AG04449 (cell line): ENCODE measurements at regions of chr17 and their contacts with region 1.

Region 1: GRCh38 chr17:76278952-76279741 is 14.0 kb downstream of the UBALD2 start:
- DNase-seq: peak; percentile 14
- H3K4me3 ChIP-seq: no peak overlapping the region
- CTCF ChIP-seq: peak; percentile 94

Region 2: DNA sequence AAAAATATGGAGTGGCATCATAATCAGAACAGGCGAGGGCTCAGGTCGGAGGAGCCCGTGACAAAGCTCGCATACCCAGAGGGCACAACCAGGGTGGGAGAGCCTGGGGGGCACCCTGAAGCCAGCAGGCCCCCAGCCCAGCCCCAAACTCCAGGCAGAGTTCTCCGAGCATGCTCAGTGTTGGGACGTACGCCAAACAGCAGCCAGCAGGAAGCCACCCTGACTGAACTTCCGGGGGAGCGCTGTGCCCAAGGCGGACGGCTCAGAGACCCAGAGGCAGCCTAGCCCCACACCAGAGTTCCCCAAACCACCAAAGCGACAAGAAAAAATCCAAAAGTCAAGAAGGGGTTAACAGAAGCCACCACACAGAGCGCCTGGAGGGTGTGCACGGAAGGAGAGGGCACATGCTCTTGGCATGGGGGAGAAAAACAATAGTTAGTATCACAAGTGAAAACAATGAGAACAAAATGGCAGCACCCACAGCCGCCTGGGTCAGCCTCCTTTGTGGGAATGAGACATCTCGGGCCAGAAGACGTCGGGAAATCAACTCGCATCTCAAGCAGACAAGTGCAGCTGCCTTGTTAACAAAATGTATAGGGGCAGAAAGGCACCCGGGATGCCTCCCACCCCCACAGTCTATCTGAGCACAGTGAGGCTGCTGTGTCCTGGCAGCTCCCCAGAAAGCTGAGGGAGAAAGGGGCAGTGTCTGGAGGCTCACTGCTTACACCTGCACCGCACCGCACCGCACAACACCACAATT is 187.4 kb before region 1 on chr17:
- CTCF ChIA-PET with region 1: interaction called, 20 read pairs
- POLR2A ChIA-PET with region 1: no interaction called
- DNase-seq: no peak
- H3K4me3 ChIP-seq: no peak overlapping the region
- CTCF ChIP-seq: no peak

Region 3: DNA sequence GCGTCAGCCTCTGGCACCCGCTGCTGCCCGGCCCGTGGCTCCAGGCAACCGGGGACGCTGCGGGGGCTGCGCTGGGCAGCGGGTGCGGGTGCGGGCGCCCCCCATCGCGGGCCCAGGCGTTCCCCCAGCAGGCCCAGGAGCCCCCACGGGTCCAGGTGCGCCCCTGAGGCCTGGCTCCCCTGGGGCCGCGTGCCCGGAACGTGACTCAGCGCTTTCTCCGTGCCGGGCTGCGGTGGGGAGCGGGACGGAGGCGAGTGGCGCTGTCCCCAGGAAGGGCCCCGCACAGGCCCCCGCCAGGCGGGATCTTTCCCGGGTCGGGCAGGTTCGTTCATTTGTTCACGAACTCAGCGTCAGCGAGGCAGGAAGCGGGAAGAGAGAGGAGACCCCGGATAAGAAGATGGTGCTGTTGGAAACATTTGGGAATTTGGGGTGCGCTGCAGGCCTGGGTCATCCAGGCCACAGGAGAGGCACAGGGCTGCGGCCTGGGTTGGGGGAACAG is 157.2 kb before region 1 on chr17:
- CTCF ChIA-PET with region 1: interaction called, 292 read pairs
- POLR2A ChIA-PET with region 1: interaction called, 3 read pairs
- DNase-seq: no peak
- H3K4me3 ChIP-seq: peak overlapping the region; percentile 23
- CTCF ChIP-seq: no peak

Region 4: GRCh38 chr17:76147211-76148014 is 131.7 kb before region 1 on chr17:
- CTCF ChIA-PET with region 1: interaction called, 16 read pairs
- POLR2A ChIA-PET with region 1: no interaction called
- DNase-seq: no peak
- H3K4me3 ChIP-seq: no peak overlapping the region
- CTCF ChIP-seq: peak; percentile 33

Region 5: DNA sequence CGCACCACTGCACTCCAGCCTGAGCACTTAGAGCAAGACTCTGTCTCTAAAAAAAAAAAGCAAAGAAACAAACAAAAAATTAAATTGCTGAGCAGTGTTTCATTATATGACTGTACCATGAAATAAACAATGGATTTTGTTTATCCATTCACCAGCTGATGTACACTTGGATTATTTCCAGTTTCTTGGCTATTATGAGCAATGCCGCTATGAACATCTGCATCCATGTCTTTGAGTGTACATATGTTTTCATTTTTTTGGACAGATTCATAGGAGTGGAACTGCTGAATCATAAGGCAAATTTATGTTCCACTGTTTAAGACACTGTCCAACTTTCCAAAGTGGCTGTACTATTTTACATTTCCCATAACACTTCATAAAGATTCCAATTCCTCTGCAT is 46.8 kb before region 1 on chr17:
- CTCF ChIA-PET with region 1: no interaction called
- POLR2A ChIA-PET with region 1: no interaction called
- DNase-seq: peak; percentile 45
- H3K4me3 ChIP-seq: no peak overlapping the region
- CTCF ChIP-seq: no peak

Region 6: GRCh38 chr17:76246080-76247066 is 32.8 kb before region 1 on chr17:
- CTCF ChIA-PET with region 1: interaction called, 22 read pairs
- POLR2A ChIA-PET with region 1: no interaction called
- DNase-seq: no peak
- H3K4me3 ChIP-seq: no peak overlapping the region
- CTCF ChIP-seq: no peak

Region 7: GRCh38 chr17:76296186-76296585 is 17.0 kb after region 1 on chr17:
- CTCF ChIA-PET with region 1: interaction called, 89 read pairs
- POLR2A ChIA-PET with region 1: no interaction called
- DNase-seq: no peak
- H3K4me3 ChIP-seq: no peak overlapping the region
- CTCF ChIP-seq: no peak

Region 8: GRCh38 chr17:76357597-76358158 is 78.5 kb after region 1 on chr17:
- CTCF ChIA-PET with region 1: no interaction called
- POLR2A ChIA-PET with region 1: no interaction called
- DNase-seq: no peak
- H3K4me3 ChIP-seq: no peak overlapping the region
- CTCF ChIP-seq: no peak

Region 9: DNA sequence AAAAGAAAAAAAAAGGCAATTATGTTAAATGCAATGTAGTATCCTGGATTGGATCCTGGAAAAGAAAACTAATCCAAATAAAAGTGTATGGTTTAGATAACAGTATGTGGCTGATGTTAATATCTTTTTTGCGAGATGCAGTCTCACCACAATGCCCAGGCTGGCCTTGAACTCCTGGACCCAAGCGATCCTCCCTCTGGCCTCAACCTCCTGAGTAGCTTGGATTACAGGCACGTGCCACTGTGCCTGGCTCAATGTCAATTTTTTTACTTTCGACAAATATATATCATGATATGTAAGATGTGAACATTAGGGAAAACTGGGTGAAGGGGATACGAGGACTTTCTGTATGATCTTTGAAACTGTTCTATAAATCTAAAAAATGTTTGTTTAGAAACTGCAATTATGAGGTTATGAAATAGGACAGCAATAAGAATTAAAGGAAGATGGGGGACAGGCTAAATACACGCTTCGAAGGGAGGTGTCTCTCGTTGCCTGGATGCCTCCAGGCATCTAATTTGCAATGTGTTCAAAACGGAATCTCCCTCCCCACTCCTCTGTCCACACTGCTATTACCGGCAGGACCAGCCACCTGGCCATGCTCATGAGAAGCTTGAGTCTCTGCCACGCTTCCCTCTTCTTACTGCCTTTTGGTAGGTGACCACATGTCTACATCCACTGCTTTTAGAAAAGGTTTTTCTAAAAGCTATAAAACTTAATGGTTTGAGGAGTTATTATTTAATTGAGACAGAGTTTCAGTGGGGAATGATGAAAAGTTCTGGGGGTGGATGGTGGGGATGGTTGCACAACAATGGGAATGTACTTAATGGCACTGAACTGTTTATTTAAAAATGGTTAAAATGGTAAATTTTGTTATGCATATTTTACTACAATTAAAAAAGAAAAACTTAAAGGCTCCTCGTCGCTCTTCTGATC is 158.6 kb after region 1 on chr17:
- CTCF ChIA-PET with region 1: no interaction called
- POLR2A ChIA-PET with region 1: no interaction called
- DNase-seq: no peak
- H3K4me3 ChIP-seq: no peak overlapping the region
- CTCF ChIP-seq: no peak

Region 10: GRCh38 chr17:76547184-76547641 is 268.1 kb after region 1 on chr17:
- CTCF ChIA-PET with region 1: no interaction called
- POLR2A ChIA-PET with region 1: no interaction called
- DNase-seq: no peak
- H3K4me3 ChIP-seq: no peak overlapping the region
- CTCF ChIP-seq: peak; percentile 68